OCI-LY7 (cell line): ENCODE measurements at regions of chr3 and their contacts with region 1.

Region 1: DNA sequence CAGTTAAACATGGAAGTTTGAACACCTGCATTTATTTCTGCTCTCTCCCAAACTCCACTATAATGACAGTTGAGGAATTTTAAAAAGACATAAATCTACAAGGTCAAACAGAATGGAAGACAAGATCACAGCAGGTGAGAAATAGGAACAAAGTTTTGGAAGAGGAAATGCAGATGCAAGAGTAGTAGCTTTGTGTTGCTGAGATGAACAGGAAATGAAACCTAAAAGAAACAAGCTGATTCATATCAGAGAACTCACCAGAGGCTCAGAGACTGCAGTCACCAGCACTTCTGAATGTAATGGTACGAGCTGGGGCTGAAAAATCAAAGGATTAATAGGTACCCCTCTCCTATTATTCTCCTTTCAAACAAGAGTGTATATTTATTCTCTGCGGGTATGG is 459.9 kb downstream of the RAP2B start:
- DNase-seq: peak; percentile 78
- H3K4me3 ChIP-seq: peak overlapping the region; percentile 54
- H3K27ac ChIP-seq: peak overlapping the region; percentile 88
- H3K4me1 ChIP-seq: peaks cover 71% of the 10 kb centered on the region
- CTCF ChIP-seq: no peak

Region 2: GRCh38 chr3:153590051-153590450 is 31.9 kb before region 1 on chr3:
- CTCF ChIA-PET with region 1: no interaction called
- POLR2A ChIA-PET with region 1: no interaction called
- intact Hi-C with region 1: no loop called
- DNase-seq: no peak
- H3K4me3 ChIP-seq: no peak overlapping the region
- H3K27ac ChIP-seq: no peak overlapping the region
- H3K4me1 ChIP-seq: no peaks in the 10 kb centered on the region
- CTCF ChIP-seq: no peak

Region 3: DNA sequence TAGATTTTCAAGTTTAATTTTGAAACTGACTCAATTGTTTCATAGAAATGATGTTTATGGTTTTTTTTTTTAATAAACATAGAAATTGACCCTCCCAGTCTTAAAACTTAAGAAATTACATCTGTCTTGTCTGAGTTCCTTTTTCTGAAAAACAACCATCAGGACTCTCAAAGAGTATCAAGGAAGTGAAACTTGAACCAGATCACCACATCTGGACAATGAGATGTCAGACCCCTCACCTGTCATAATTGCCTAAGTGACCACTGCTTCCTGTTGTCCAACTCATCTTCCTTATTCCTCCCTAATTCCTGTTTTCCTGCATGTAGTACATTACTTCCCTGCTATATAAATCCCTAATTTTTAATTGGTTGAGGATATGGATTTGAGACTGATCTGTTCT is 57.8 kb after region 1 on chr3:
- CTCF ChIA-PET with region 1: no interaction called
- POLR2A ChIA-PET with region 1: interaction called, 4 read pairs
- intact Hi-C with region 1: loop called (anchors 1 kb)
- DNase-seq: peak; percentile 85
- H3K4me3 ChIP-seq: peak overlapping the region; percentile 51
- H3K27ac ChIP-seq: peak overlapping the region; percentile 71
- H3K4me1 ChIP-seq: peaks cover 28% of the 10 kb centered on the region
- CTCF ChIP-seq: no peak

Region 4: GRCh38 chr3:153744889-153745288 is 122.9 kb after region 1 on chr3:
- CTCF ChIA-PET with region 1: no interaction called
- POLR2A ChIA-PET with region 1: interaction called, 12 read pairs
- intact Hi-C with region 1: loop called (anchors 2 kb)
- DNase-seq: no peak
- H3K4me3 ChIP-seq: peak overlapping the region; percentile 62
- H3K27ac ChIP-seq: peak overlapping the region; percentile 78
- H3K4me1 ChIP-seq: peaks cover 75% of the 10 kb centered on the region
- CTCF ChIP-seq: no peak

Region 5: DNA sequence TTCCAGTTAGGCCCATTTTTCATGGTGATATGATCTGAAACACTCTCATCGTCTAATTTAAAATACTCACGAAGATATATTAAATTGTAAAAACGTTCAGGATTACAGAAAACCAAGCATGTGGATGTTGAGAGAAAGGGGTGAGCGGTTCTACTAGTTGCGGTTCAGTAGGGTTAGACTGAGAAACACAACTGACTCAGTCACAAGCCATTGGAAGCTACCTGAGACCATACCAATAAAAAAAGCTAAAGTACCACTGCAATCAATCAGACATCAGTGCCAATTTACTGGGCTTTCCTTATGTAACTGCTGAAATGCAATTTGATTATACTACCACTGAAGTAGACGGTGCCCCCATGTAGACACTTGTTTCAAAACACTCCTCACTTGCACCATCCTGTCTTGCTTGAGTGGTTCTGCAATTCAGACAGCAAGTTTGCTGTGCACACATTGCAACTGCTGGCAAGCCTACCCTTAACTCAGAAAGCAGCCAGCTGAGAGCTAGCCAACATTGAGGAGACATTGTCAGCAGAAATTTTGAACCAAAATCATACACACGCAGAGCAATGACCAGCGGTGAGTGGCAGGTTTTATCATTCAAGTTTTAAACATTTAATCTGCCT is 130.6 kb after region 1 on chr3:
- CTCF ChIA-PET with region 1: no interaction called
- POLR2A ChIA-PET with region 1: interaction called, 12 read pairs
- intact Hi-C with region 1: loop called (anchors 2 kb)
- DNase-seq: peak; percentile 85
- H3K4me3 ChIP-seq: peak overlapping the region; percentile 54
- H3K27ac ChIP-seq: peak overlapping the region; percentile 83
- H3K4me1 ChIP-seq: peaks cover 75% of the 10 kb centered on the region
- CTCF ChIP-seq: no peak

Region 6: GRCh38 chr3:154040286-154040685 is 418.3 kb after region 1 on chr3:
- CTCF ChIA-PET with region 1: no interaction called
- POLR2A ChIA-PET with region 1: no interaction called
- intact Hi-C with region 1: no loop called
- DNase-seq: peak; percentile 21
- H3K4me3 ChIP-seq: no peak overlapping the region
- H3K27ac ChIP-seq: no peak overlapping the region
- H3K4me1 ChIP-seq: no peaks in the 10 kb centered on the region
- CTCF ChIP-seq: peak; percentile 74